ENCODE measurements at regions of chr17 and their contacts with region 1.

Region 1: GRCh38 chr17:5373112-5373511 is 46.4 kb downstream of the NUP88 start:
- DNase-seq: no peak
- ATAC-seq: peak; percentile 83 to 90 (median 90)
- H3K4me3 ChIP-seq: no peak overlapping the region
- H3K27ac ChIP-seq: peak overlapping the region; percentile 67
- H3K4me1 ChIP-seq: no peaks in the 10 kb centered on the region
- H3K27me3 ChIP-seq: no peaks in the 10 kb centered on the region
- CTCF ChIP-seq: no peak

Region 2: DNA sequence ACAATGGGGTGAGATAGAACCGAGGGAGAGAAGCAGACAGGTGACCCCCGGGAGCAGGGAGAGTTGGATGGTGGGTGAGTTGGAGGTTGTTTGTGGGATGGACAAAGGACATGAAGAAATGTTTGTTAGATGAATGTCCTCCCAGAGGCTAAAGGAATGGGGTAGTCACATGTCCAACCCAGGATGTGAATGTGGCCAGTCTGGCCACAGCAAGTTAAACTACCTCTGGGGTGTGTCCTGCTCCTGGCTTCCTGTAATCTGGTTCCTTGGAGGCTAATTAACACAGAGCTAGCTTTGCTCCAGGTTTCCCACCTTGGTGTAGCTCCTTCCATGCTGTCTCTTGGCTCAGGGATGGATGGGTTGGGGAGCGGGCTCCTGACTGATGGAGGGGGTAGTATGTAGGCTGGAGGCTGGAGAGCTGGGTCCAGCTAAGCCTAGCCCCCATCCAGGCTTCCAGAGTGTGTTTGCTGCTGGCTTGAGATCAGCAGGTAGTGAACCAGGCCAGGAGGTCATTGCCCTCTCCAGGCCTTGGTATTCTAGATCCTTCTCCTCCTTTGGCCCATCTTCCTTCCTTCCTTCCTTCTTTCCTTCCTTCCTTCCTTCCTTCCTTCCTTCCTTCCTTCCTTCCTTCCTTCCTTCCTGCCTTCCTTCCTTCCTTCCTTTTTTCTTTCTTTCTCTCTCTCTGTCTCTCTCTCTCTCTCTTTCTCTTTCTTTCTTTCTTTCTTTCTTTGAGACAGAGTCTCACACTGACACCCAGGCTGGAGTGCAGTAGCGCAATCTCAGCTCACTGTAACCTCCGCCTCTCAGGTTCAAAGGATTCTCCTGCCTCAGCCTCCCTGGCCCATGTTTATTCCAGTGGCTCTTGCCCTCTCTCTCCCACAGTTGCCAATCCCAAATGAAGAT is 978.7 kb before region 1 on chr17:
- intact Hi-C with region 1: no loop called
- DNase-seq: no peak
- ATAC-seq: no peak
- H3K4me3 ChIP-seq: no peak overlapping the region
- H3K27ac ChIP-seq: no peak overlapping the region
- H3K4me1 ChIP-seq: no peaks in the 10 kb centered on the region
- H3K27me3 ChIP-seq: peaks cover 0 to 2% (median 0%) of the 10 kb centered on the region in 3 donors
- CTCF ChIP-seq: no peak

Region 3: DNA sequence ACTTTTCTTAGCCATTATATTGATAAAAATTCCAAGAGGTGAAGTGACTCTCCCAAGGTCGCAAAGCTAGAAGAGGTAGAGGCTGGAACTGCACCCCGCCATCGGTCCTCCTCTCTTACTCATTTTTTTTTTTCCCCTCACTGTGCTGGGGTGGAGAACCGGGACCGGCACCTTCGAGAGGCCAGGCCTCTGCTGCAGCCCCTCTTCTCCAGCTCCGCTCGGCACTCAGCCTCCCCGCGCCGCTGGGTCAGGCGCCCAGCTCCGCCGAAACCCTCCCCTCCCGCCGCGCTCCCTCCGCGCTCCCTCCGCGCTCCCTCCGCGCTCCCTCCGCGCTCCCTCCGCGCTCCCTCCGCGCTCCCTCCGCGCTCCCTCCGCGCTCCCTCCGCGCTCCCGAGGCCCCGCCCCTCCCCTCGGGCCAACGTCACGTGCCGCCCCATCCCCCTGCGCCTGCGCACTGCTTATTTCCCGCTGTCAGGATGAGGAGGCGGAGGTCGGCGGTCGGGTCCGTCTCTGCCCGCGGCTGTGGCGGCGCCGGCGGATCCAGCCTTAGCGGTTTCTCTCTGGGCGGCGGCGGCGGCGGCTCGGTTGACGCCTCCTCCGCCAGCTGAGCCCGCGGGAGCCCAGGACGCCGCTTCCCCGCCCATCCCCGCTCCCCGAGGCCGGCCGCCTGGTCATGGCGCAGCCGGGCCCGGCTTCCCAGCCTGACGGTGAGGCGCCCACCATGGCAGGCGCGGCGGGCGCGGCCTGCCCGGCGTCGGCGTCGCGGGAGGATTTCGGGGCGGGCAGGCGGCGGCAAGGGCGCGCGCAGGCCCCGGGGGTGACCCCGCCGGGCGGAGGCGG is 91.1 kb before region 1 on chr17 and contains the start of gene RABEP1:
- intact Hi-C with region 1: loop called in 1 of 2 experiments (anchors 5 kb)
- DNase-seq: peak; percentile 95 to 97
- ATAC-seq: peak; percentile 94 to 95 (median 94)
- H3K4me3 ChIP-seq: peak within 1 kb of the TSS; percentile 91
- H3K27ac ChIP-seq: peak within 1 kb of the TSS; percentile 95
- H3K4me1 ChIP-seq: peaks cover 35% of the 10 kb centered on the region
- H3K27me3 ChIP-seq: no peaks in the 10 kb centered on the region
- CTCF ChIP-seq: peak; percentile 28
- total RNA-seq, gene RABEP1: 69.9 to 86.1 (median 80.1) TPM

Measured in psoas muscle (tissue), 8 donors.